HepG2 (cell line): ENCODE measurements at regions of chr22 and their contacts with region 1.

Region 1: GRCh38 chr22:46737976-46738646 is at the start of gene CERK:
- DNase-seq: peak; percentile 36
- ATAC-seq: peak; percentile 60
- H3K4me3 ChIP-seq: peak within 1 kb of the TSS; percentile 79 to 92 (median 84)
- H3K27ac ChIP-seq: peak within 1 kb of the TSS; percentile 87
- H3K4me1 ChIP-seq: peaks cover 78% of the 10 kb centered on the region
- H3K27me3 ChIP-seq: no peaks in the 10 kb centered on the region; a peak in 1 of 5 replicates
- CTCF ChIP-seq: no peak
- EP300 ChIP-seq: no peak
- POLR2A ChIP-seq: peak in 1 of 2 experiments; percentile 73; a peak in 2 of 4 replicates
- RAD21 ChIP-seq: no peak
- total RNA-seq, gene CERK: 40.3 and 41.8 TPM in 2 replicates

Region 2: GRCh38 chr22:46576556-46577367 is 161.3 kb before region 1 on chr22:
- CTCF ChIA-PET with region 1: no interaction called
- POLR2A ChIA-PET with region 1: no interaction called
- in situ Hi-C with region 1: no loop called
- intact Hi-C with region 1: loop called (anchors 10 kb)
- DNase-seq: no peak
- ATAC-seq: no peak
- H3K4me3 ChIP-seq: peak overlapping the region in 2 of 3 experiments; percentile 63 to 80; a peak in 4 of 6 replicates
- H3K27ac ChIP-seq: no peak overlapping the region
- H3K4me1 ChIP-seq: peaks cover 75% of the 10 kb centered on the region
- H3K27me3 ChIP-seq: peaks cover 0 to 11% of the 10 kb centered on the region in 2 experiments; a peak in 2 of 5 replicates
- CTCF ChIP-seq: no peak
- EP300 ChIP-seq: no peak
- POLR2A ChIP-seq: no peak
- RAD21 ChIP-seq: no peak

Region 3: DNA sequence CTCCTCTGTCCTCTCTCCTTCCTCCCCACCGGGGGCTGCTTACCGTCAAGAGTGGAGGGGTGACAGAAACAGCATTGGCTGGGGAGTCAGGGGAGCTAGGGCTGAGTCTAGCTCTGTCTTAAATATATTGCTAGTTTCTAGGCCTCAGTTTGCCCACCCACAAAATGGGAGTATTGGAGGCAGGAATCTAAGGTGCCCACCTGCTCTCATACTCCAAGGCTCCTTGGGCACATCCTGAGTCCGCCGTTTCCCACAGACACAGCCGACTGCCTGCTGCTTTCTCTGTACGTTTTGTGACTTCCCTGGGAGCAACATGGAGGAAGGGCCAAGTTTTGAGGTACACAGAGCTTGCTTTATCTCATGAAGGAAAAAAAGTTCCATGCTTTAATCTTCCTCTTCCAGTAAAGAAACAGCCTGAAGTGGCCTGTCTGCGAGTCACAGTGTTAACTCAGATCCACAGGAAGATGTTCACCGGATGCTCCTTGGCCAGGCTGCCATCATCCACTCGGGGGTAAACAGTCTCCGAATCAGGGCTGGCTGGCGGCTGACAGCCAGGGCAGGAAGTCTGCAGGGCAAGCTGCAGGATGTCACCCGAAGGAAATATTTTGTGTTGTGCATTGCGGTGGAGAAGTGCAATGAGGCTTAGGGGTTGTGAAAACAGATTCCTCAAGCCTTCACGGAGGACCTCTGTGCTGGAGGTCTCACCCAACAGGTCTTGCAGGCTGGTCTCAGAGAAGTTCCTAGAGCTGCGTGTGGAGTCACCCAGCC is 11.0 kb after region 1 on chr22:
- CTCF ChIA-PET with region 1: no interaction called
- POLR2A ChIA-PET with region 1: interaction called, 42 read pairs
- in situ Hi-C with region 1: no loop called
- intact Hi-C with region 1: loop called (anchors 2 kb)
- DNase-seq: no peak
- ATAC-seq: no peak
- H3K4me3 ChIP-seq: peak overlapping the region in 1 of 3 experiments; percentile 56; a peak in 2 of 6 replicates
- H3K27ac ChIP-seq: no peak overlapping the region
- H3K4me1 ChIP-seq: peaks cover 73% of the 10 kb centered on the region
- H3K27me3 ChIP-seq: peaks cover 3 to 25% of the 10 kb centered on the region in 2 experiments; a peak in 3 of 5 replicates
- CTCF ChIP-seq: no peak
- EP300 ChIP-seq: no peak
- POLR2A ChIP-seq: no peak
- RAD21 ChIP-seq: no peak

Region 4: GRCh38 chr22:46754110-46754799 is 16.1 kb after region 1 on chr22:
- CTCF ChIA-PET with region 1: interaction called, 5 read pairs
- POLR2A ChIA-PET with region 1: interaction called, 42 read pairs
- in situ Hi-C with region 1: no loop called
- intact Hi-C with region 1: loop called (anchors 2 kb)
- DNase-seq: peak; percentile 92
- ATAC-seq: peak; percentile 87
- H3K4me3 ChIP-seq: peak overlapping the region; percentile 12 to 51 (median 16); a peak in 5 of 6 replicates
- H3K27ac ChIP-seq: peak overlapping the region; percentile 78
- H3K4me1 ChIP-seq: peaks cover 58% of the 10 kb centered on the region
- H3K27me3 ChIP-seq: no peaks in the 10 kb centered on the region; a peak in 1 of 5 replicates
- CTCF ChIP-seq: 0 out of 2 replicates have a peak, but pooled peaks have one; percentile 3
- EP300 ChIP-seq: peak in 1 of 2 experiments; percentile 49; a peak in 1 of 4 replicates
- POLR2A ChIP-seq: peak; percentile 65 to 94; a peak in 3 of 4 replicates
- RAD21 ChIP-seq: no peak